Sigmoid colon (tissue), 7 donors: ENCODE measurements at regions of chr6 and their contacts with region 1.

Region 1: DNA sequence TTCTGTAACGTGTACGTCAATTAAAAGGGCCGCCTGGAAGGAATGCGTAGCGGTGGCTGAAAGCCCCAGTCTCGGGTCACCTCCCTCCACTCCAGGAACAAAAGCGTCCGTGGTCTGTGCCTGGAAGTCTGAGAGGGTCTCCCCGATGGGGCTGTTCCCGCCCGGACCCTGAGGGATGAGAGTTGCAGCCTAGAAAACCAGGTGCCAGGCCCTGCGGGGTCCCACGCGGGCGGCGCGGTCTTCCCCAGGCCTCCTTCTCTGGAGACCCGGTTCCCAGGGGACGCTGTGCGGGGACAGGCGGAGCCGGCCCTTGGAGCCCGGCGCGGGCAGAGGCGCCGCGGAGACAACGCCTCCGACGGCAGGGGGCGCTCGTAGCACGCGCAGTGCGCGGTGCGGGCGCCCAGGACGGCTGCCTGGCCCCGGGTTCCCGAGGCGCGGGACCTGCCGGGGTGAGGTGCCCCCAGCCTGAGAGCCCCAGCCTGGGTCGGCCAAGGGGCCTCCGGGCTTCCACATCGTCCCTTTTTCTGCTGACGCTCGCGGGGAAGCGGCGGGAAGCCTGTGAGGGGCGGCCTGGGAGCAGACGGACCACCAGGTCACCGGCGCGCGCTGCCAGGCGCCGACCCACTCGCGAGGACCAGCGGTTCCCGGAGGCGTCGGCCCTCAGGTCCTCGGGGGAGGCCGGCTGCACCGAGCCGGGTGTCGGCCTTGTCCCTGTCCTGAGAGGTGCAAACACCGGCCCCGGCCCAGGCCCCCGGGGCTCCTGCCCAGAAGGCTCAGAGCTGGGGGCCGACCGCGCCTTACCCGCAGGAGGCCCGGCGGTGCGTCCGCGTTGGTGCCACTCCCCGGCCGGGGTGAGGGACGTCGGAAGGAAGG is 5.3 kb upstream of the FOXC1 start:
- DNase-seq: peak; percentile 66
- H3K4me3 ChIP-seq: peak overlapping the region in 3 of 4 donors; percentile 36 to 45 (median 44)
- H3K27ac ChIP-seq: no peak overlapping the region
- H3K4me1 ChIP-seq: peaks cover 0 to 49% (median 30%) of the 10 kb centered on the region in 4 donors
- H3K27me3 ChIP-seq: peaks cover 59 to 91% (median 87%) of the 10 kb centered on the region in 3 donors
- CTCF ChIP-seq: peak; percentile 28 to 98 (median 47)
- EP300 ChIP-seq: no peak
- POLR2A ChIP-seq: no peak

Region 2: DNA sequence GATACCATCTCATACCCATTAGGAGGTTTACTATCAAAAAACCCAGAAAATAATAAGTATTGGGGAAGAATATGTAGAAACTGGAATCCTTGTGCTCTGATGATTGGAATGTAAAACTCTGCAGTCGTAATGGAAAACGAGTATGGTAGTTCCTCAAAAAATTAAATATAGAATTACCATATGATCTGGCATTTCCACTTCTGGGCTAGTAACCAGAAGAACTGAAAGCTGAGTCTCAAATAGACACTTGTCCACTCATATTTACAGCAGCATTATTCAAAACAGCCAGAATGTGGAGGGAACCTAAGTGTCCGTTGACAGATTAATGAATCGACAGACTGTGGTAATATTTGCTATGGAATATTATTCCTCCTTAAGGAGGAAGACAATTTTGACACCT is 49.7 kb after region 1 on chr6:
- intact Hi-C with region 1: no loop called
- DNase-seq: no peak
- H3K4me3 ChIP-seq: no peak overlapping the region
- H3K27ac ChIP-seq: no peak overlapping the region
- H3K4me1 ChIP-seq: no peaks in the 10 kb centered on the region
- H3K27me3 ChIP-seq: no peaks in the 10 kb centered on the region
- CTCF ChIP-seq: no peak
- EP300 ChIP-seq: no peak
- POLR2A ChIP-seq: no peak

Region 3: GRCh38 chr6:2196079-2196679 is 591.8 kb after region 1 on chr6:
- intact Hi-C with region 1: loop called (anchors 2 kb)
- DNase-seq: no peak
- H3K4me3 ChIP-seq: no peak overlapping the region
- H3K27ac ChIP-seq: no peak overlapping the region
- H3K4me1 ChIP-seq: no peaks in the 10 kb centered on the region
- H3K27me3 ChIP-seq: no peaks in the 10 kb centered on the region
- CTCF ChIP-seq: peak in 3 of 4 experiments; percentile 64 to 80 (median 69)
- EP300 ChIP-seq: no peak
- POLR2A ChIP-seq: no peak

Region 4: DNA sequence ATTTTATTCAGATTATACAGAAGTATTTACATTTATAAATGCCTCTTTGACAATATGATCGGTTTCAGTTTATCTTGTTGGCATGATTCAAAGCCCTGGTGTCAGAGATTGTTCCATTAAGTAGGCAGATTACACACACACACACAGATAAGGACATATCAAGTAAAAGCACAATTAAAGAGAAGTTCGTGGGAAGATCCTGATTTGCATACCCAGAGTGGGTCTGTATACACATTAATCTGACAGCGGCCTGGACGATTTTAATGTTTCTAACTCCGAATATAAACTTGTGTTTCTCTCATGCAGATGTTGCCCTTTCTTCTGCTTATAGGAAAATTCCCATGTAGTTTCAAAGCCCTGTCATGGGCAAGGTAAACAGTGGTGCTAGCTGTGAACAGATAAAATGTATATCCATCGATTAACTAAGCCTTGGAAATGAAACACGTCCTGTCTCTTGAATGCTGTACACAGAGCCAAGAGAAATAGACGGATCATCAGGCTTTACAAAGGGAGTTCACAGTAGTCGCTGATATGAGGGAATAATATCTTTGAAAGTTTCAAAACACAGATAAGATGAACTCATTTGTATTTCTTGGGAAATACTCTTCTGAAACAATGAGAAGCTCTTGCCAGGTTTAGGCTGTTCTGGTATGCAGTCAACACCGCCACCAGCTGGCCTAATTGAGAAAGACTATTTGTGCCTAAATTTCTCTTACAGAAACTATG is 749.2 kb after region 1 on chr6:
- intact Hi-C with region 1: loop called (anchors 2 kb)
- DNase-seq: peak; percentile 71
- H3K4me3 ChIP-seq: no peak overlapping the region
- H3K27ac ChIP-seq: peak overlapping the region in 1 of 4 donors; percentile 18
- H3K4me1 ChIP-seq: peaks cover 0 to 14% (median 5%) of the 10 kb centered on the region in 4 donors
- H3K27me3 ChIP-seq: no peaks in the 10 kb centered on the region
- CTCF ChIP-seq: peak; percentile 58 to 78 (median 63)
- EP300 ChIP-seq: no peak
- POLR2A ChIP-seq: no peak